ENCODE measurements at regions of chr2 and their contacts with region 1.

Region 1: GRCh38 chr2:48946449-48947048 is 191.0 kb upstream of the LHCGR start:
- DNase-seq: peak in 6 of 9 experiments; percentile 4 to 46 (median 11)
- ATAC-seq: peak; percentile 71
- H3K4me3 ChIP-seq: no peak overlapping the region
- H3K4me3 Mint-ChIP-seq: no peak overlapping the region
- H3K27ac ChIP-seq: no peak overlapping the region
- H3K27ac Mint-ChIP-seq: no peak overlapping the region
- H3K4me1 ChIP-seq: no peaks in the 10 kb centered on the region
- H3K4me1 Mint-ChIP-seq: no peaks in the 10 kb centered on the region
- H3K27me3 ChIP-seq: no peaks in the 10 kb centered on the region
- H3K27me3 Mint-ChIP-seq: no peaks in the 10 kb centered on the region
- CTCF ChIP-seq: peak; percentile 86

Region 2: DNA sequence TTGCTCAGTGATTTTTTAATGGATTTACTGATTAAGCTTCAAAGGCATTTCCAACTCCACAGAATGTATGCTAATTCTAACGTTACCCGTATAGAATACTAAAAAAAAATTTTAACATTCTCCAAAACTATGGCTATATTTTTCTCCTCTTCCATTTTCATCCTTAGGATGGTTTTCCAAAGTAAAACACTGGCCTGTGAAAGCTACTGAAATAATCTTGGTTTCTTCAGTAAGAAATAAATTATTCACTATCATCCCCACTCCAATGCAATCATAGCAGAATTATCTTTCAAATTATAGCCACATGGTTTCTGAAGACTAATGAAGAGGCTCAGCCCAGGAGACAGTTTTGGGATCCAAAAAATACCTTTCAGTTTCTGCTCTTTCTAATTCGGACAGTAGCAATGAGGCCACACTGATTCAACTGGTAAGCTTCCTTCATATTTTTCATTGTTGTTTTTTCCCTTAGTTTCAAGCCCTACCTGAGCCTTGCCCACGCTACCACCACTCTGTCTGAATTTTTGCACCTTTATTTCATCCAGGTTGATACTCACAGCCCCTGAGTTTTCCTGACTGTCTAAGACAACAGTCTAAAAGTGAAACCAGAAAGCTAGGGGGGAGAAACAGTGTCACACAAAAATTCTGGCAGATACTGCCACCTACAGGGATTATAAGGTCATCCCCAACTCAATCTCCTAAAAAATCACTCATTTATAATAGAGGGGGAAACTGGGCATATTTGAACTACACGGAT is 1197.5 kb after region 1 on chr2:
- CTCF ChIA-PET with region 1: no interaction called
- POLR2A ChIA-PET with region 1: no interaction called
- intact Hi-C with region 1: loop called (anchors 5 to 10 kb)
- DNase-seq: peak in 2 of 9 experiments; percentile 10 to 22
- ATAC-seq: no peak
- H3K4me3 ChIP-seq: no peak overlapping the region
- H3K4me3 Mint-ChIP-seq: peak overlapping the region; percentile 61
- H3K27ac ChIP-seq: no peak overlapping the region
- H3K27ac Mint-ChIP-seq: no peak overlapping the region
- H3K4me1 ChIP-seq: no peaks in the 10 kb centered on the region
- H3K4me1 Mint-ChIP-seq: peaks cover 1% of the 10 kb centered on the region
- H3K27me3 ChIP-seq: no peaks in the 10 kb centered on the region
- H3K27me3 Mint-ChIP-seq: no peaks in the 10 kb centered on the region
- CTCF ChIP-seq: no peak

Region 3: GRCh38 chr2:50492477-50492851 is 1545.9 kb after region 1 on chr2:
- CTCF ChIA-PET with region 1: interaction called, 3 read pairs
- POLR2A ChIA-PET with region 1: no interaction called
- intact Hi-C with region 1: loop called (anchors 2 kb)
- DNase-seq: peak in 2 of 9 experiments; percentile 42 to 50
- ATAC-seq: no peak
- H3K4me3 ChIP-seq: no peak overlapping the region
- H3K4me3 Mint-ChIP-seq: no peak overlapping the region
- H3K27ac ChIP-seq: no peak overlapping the region
- H3K27ac Mint-ChIP-seq: no peak overlapping the region
- H3K4me1 ChIP-seq: no peaks in the 10 kb centered on the region
- H3K4me1 Mint-ChIP-seq: peaks cover 13% of the 10 kb centered on the region
- H3K27me3 ChIP-seq: no peaks in the 10 kb centered on the region
- H3K27me3 Mint-ChIP-seq: no peaks in the 10 kb centered on the region
- CTCF ChIP-seq: peak; percentile 46

Measured in CD8-positive, alpha-beta T cell (primary cell).